ENCODE measurements at regions of chr2 and their contacts with region 1.

Region 1: GRCh38 chr2:36461039-36461681 is 105.6 kb downstream of the CRIM1 start:
- H3K4me3 ChIP-seq: no peak overlapping the region
- H3K27ac ChIP-seq: no peak overlapping the region
- H3K4me1 ChIP-seq: peaks cover 11% of the 10 kb centered on the region; the same call in 1 of the 2 replicates
- CTCF ChIP-seq: no peak

Region 2: GRCh38 chr2:36059691-36060090 is 401.5 kb before region 1 on chr2:
- CTCF ChIA-PET with region 1: no interaction called
- POLR2A ChIA-PET with region 1: no interaction called
- H3K4me3 ChIP-seq: no peak overlapping the region
- H3K27ac ChIP-seq: no peak overlapping the region
- H3K4me1 ChIP-seq: no peaks in the 10 kb centered on the region
- CTCF ChIP-seq: no peak

Region 3: GRCh38 chr2:36371928-36372391 is 89.2 kb before region 1 on chr2:
- CTCF ChIA-PET with region 1: interaction called, 11 read pairs
- POLR2A ChIA-PET with region 1: no interaction called
- H3K4me3 ChIP-seq: no peak overlapping the region
- H3K27ac ChIP-seq: no peak overlapping the region
- H3K4me1 ChIP-seq: peaks cover 49% of the 10 kb centered on the region
- CTCF ChIP-seq: no peak

Region 4: DNA sequence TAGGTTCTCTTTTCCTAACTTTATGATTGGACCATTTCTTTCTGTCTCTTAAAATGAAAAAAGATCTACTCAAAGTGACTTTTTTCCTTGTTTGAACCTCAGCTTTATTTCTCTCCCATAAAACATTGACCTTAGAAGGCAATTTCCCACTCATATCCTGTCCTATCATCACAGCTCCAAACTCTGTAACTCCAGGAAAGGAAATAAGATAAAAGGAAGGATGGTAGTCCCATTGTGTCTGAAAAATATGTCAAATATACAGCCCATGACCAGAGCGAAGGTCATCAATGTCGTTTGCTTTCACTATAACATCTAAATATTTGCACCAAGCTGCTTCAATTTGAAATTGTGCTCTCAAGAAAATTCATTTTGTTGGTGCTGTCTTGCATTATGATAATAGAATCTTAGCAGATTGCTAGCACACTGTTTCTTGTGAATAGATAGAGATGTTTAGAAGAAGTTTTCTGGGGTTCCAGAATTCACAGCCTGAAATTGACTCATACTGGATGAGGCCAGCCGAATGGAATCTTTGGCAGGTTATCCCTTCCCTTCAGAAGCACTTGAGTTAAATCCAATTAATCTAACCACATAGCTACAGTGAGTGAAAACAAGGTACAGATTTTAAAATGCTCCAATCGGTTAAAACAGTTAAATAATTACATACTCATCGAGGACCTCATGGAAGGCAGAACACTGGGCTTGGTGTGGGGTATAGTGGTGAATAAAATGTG is 10.5 kb before region 1 on chr2:
- CTCF ChIA-PET with region 1: interaction called, 18 read pairs
- POLR2A ChIA-PET with region 1: no interaction called
- H3K4me3 ChIP-seq: no peak overlapping the region
- H3K27ac ChIP-seq: no peak overlapping the region
- H3K4me1 ChIP-seq: no peaks in the 10 kb centered on the region
- CTCF ChIP-seq: no peak